ENCODE measurements at regions of chr11 and their contacts with region 1.

Region 1: GRCh38 chr11:13249996-13250395 is 27.6 kb upstream of the BMAL1 start:
- DNase-seq: no peak
- H3K4me3 ChIP-seq: no peak overlapping the region
- H3K27me3 ChIP-seq: peaks cover 2% of the 10 kb centered on the region; the same call in 1 of the 2 replicates
- CTCF ChIP-seq: peak; percentile 34; the same call in 1 of the 2 replicates

Region 2: GRCh38 chr11:13210424-13210823 is 39.6 kb before region 1 on chr11:
- CTCF ChIA-PET with region 1: interaction called, 10 read pairs
- POLR2A ChIA-PET with region 1: no interaction called
- DNase-seq: peak; percentile 26
- H3K4me3 ChIP-seq: no peak overlapping the region
- H3K27me3 ChIP-seq: no peaks in the 10 kb centered on the region
- CTCF ChIP-seq: peak; percentile 55

Region 3: GRCh38 chr11:13261591-13262061 is 11.6 kb after region 1 on chr11:
- CTCF ChIA-PET with region 1: interaction called, 16 read pairs
- POLR2A ChIA-PET with region 1: no interaction called
- DNase-seq: peak; percentile 82
- H3K4me3 ChIP-seq: no peak overlapping the region
- H3K27me3 ChIP-seq: no peaks in the 10 kb centered on the region
- CTCF ChIP-seq: no peak

Measured in BJ (cell line).